ENCODE measurements at regions of chr9 and their contacts with region 1.

Region 1: GRCh38 chr9:113657703-113658544 is 194.4 kb downstream of the RGS3 start:
- DNase-seq: peak; percentile 64
- H3K4me3 Mint-ChIP-seq: no peak overlapping the region
- H3K27ac Mint-ChIP-seq: no peak overlapping the region
- H3K4me1 Mint-ChIP-seq: peaks cover 9% of the 10 kb centered on the region
- H3K27me3 Mint-ChIP-seq: peaks cover 21% of the 10 kb centered on the region

Region 2: GRCh38 chr9:113446323-113446740 is 211.6 kb before region 1 on chr9:
- intact Hi-C with region 1: loop called (anchors 1 kb)
- DNase-seq: no peak
- H3K4me3 Mint-ChIP-seq: no peak overlapping the region
- H3K27ac Mint-ChIP-seq: no peak overlapping the region
- H3K4me1 Mint-ChIP-seq: peaks cover 3% of the 10 kb centered on the region
- H3K27me3 Mint-ChIP-seq: no peaks in the 10 kb centered on the region

Region 3: GRCh38 chr9:113511856-113512761 is 145.8 kb before region 1 on chr9:
- intact Hi-C with region 1: loop called (anchors 5 kb)
- DNase-seq: peak; percentile 66
- H3K4me3 Mint-ChIP-seq: peak overlapping the region; percentile 54
- H3K27ac Mint-ChIP-seq: peak overlapping the region; percentile 96
- H3K4me1 Mint-ChIP-seq: peaks cover 56% of the 10 kb centered on the region
- H3K27me3 Mint-ChIP-seq: peaks cover 4% of the 10 kb centered on the region

Region 4: GRCh38 chr9:113591001-113591898 is 66.7 kb before region 1 on chr9:
- intact Hi-C with region 1: loop called (anchors 1 kb)
- DNase-seq: peak; percentile 44
- H3K4me3 Mint-ChIP-seq: no peak overlapping the region
- H3K27ac Mint-ChIP-seq: peak overlapping the region; percentile 60
- H3K4me1 Mint-ChIP-seq: peaks cover 44% of the 10 kb centered on the region
- H3K27me3 Mint-ChIP-seq: no peaks in the 10 kb centered on the region

Region 5: GRCh38 chr9:113622600-113623400 is 35.1 kb before region 1 on chr9:
- intact Hi-C with region 1: loop called (anchors 2 kb)
- DNase-seq: peak; percentile 20
- H3K4me3 Mint-ChIP-seq: peak overlapping the region; percentile 53
- H3K27ac Mint-ChIP-seq: peak overlapping the region; percentile 98
- H3K4me1 Mint-ChIP-seq: peaks cover 52% of the 10 kb centered on the region
- H3K27me3 Mint-ChIP-seq: no peaks in the 10 kb centered on the region

Region 6: GRCh38 chr9:114282926-114283325 is 625.0 kb after region 1 on chr9:
- intact Hi-C with region 1: no loop called
- DNase-seq: no peak
- H3K4me3 Mint-ChIP-seq: no peak overlapping the region
- H3K27ac Mint-ChIP-seq: no peak overlapping the region
- H3K4me1 Mint-ChIP-seq: no peaks in the 10 kb centered on the region
- H3K27me3 Mint-ChIP-seq: no peaks in the 10 kb centered on the region

Measured in activated T-helper 2 cell treated with anti-CD3 and anti-CD28 coated beads, Interferon-gamma antibody, Interleukin-2, Interleukin-4, amounts not matched to agents 10 μg/mL and 5 μg/mL and 100 μg/mL, durations not matched to agents 14 hours and 24 hours and 36 hours (primary cell).